Ascending aorta (tissue), 2 donors: ENCODE measurements at regions of chr6 and their contacts with region 1.

Region 1: GRCh38 chr6:121826156-121826810 is 390.8 kb downstream of the GJA1 start:
- DNase-seq: no peak
- H3K4me3 ChIP-seq: no peak overlapping the region
- H3K27ac ChIP-seq: no peak overlapping the region
- H3K4me1 ChIP-seq: peaks cover 0 to 9% of the 10 kb centered on the region in 2 donors
- H3K27me3 ChIP-seq: no peaks in the 10 kb centered on the region
- CTCF ChIP-seq: no peak

Region 2: GRCh38 chr6:121730616-121731015 is 95.7 kb before region 1 on chr6:
- intact Hi-C with region 1: loop called (anchors 2 kb)
- DNase-seq: no peak
- H3K4me3 ChIP-seq: no peak overlapping the region
- H3K27ac ChIP-seq: no peak overlapping the region
- H3K4me1 ChIP-seq: peaks cover 0 to 11% of the 10 kb centered on the region in 2 donors
- H3K27me3 ChIP-seq: no peaks in the 10 kb centered on the region
- CTCF ChIP-seq: no peak